Common myeloid progenitor, CD34-positive (primary cell): ENCODE measurements at regions of chr1 and their contacts with region 1.

Region 1: GRCh38 chr1:155989242-155990004 is 11.1 kb upstream of the ARHGEF2 start:
- DNase-seq: peak; percentile 73 to 87 (median 81)
- H3K4me3 ChIP-seq: peak overlapping the region in 4 of 7 experiments; percentile 36 to 64 (median 37)
- H3K27ac ChIP-seq: no peak overlapping the region
- H3K4me1 ChIP-seq: peaks cover 0 to 22% (median 18%) of the 10 kb centered on the region in 4 experiments
- H3K27me3 ChIP-seq: no peaks in the 10 kb centered on the region

Region 2: DNA sequence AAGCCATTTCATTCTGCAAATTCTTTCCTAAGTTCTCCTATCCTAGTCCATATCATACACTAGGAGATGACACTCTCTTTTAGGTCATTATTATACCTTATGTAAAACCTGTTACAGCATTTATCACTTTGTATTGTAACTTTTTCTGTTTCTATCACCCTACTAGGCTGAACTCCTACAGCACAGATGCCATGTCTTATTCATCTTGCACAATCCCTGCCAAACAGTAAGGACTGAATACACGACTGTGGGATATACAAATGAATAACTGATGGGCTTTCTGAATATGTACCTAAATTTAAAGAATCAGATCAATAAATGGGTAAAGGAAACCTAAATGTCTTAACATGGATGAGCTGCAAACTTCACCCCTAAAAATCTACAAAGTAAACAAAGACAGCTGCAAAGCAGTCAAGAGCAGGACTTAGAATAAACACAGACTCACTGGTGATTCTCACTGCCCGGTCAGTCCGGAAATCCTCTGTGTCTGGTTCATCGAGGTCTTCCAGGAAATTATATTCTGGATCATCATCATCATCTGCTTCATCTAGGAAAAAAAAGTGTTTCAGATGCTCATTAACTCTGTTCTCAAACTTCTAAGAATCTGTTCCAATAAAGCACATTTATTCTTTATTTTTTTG is 194.7 kb before region 1 on chr1:
- CTCF ChIA-PET with region 1: no interaction called
- POLR2A ChIA-PET with region 1: no interaction called
- DNase-seq: no peak
- H3K4me3 ChIP-seq: no peak overlapping the region
- H3K27ac ChIP-seq: no peak overlapping the region
- H3K4me1 ChIP-seq: no peaks in the 10 kb centered on the region
- H3K27me3 ChIP-seq: no peaks in the 10 kb centered on the region

Region 3: DNA sequence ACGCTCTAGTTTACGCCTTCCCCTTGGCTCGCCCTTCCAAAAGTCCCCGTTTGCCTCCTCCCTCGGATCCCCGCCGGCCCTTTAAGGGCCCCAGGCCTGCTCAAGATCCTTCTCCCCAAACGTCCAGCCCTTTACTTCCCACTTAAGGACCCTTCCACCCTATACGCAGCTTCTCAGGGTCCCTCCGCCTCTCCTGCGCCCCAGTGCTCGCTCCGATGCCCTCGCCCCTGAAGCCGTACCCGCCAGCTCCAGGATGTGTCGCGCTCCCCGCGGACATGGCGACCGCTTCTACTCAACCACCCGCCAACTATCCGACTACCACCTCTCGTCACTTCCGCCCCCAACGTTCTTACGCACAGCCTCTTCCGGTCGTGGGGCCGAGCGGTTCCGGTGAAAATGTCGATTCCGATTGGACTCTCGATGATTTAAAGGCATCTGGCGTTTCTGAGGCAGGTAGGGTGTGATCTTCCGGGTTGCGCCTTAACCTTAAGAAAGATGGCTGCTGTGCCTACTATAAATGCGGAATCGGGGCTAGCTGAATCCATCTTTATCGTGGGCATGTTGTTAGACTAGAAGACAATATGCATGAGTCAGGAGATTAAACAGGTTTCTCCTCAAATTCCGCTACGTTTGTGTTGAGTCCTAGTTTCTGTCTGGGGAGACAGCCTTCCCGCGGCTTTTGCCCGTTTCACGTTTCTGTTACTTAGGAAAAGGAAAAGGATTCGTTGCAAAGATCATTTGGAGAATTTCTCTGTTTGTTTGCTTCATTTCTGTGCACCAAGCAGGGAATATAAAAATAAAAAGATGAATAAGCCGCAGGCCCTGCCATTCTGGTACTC is 55.1 kb before region 1 on chr1 and contains the start of gene KHDC4:
- CTCF ChIA-PET with region 1: interaction called, 36 read pairs
- POLR2A ChIA-PET with region 1: interaction called, 5 read pairs
- DNase-seq: peak; percentile 99 to 100 (median 100)
- H3K4me3 ChIP-seq: peak within 1 kb of the TSS; percentile 74 to 100 (median 93)
- H3K27ac ChIP-seq: peak within 1 kb of the TSS; percentile 99
- H3K4me1 ChIP-seq: peaks cover 4 to 34% (median 28%) of the 10 kb centered on the region in 4 experiments
- H3K27me3 ChIP-seq: no peaks in the 10 kb centered on the region

Region 4: GRCh38 chr1:155961937-155962336 is 27.5 kb before region 1 on chr1:
- CTCF ChIA-PET with region 1: interaction called, 208 read pairs
- POLR2A ChIA-PET with region 1: interaction called, 3 read pairs
- DNase-seq: peak in 2 of 3 donors; percentile 31 to 53
- H3K4me3 ChIP-seq: no peak overlapping the region
- H3K27ac ChIP-seq: peak overlapping the region in 1 of 2 experiments; percentile 40
- H3K4me1 ChIP-seq: peaks cover 0 to 28% (median 13%) of the 10 kb centered on the region in 4 experiments
- H3K27me3 ChIP-seq: no peaks in the 10 kb centered on the region

Region 5: GRCh38 chr1:155978325-155978972 is 11.0 kb before region 1 on chr1 and contains the start of gene ARHGEF2:
- CTCF ChIA-PET with region 1: interaction called, 92 read pairs
- POLR2A ChIA-PET with region 1: interaction called, 4 read pairs
- DNase-seq: peak; percentile 87 to 96 (median 93)
- H3K4me3 ChIP-seq: peak within 1 kb of the TSS; percentile 79 to 99 (median 92)
- H3K27ac ChIP-seq: peak within 1 kb of the TSS; percentile 87 to 95
- H3K4me1 ChIP-seq: peaks cover 44 to 87% (median 83%) of the 10 kb centered on the region in 4 experiments
- H3K27me3 ChIP-seq: no peaks in the 10 kb centered on the region

Region 6: GRCh38 chr1:156065212-156065611 is 75.8 kb after region 1 on chr1:
- CTCF ChIA-PET with region 1: interaction called, 15 read pairs
- POLR2A ChIA-PET with region 1: no interaction called
- DNase-seq: no peak
- H3K4me3 ChIP-seq: no peak overlapping the region
- H3K27ac ChIP-seq: no peak overlapping the region
- H3K4me1 ChIP-seq: peaks cover 0 to 8% (median 4%) of the 10 kb centered on the region in 4 experiments
- H3K27me3 ChIP-seq: no peaks in the 10 kb centered on the region